ENCODE measurements at regions of chr10 and their contacts with region 1.

Region 1: GRCh38 chr10:132571650-132572535 is 34.3 kb downstream of the INPP5A start:
- DNase-seq: no peak
- ATAC-seq: peak; percentile 39 to 93

Region 2: GRCh38 chr10:132458593-132459300 is 113.1 kb before region 1 on chr10:
- intact Hi-C with region 1: loop called in 1 of 2 experiments (anchors 10 kb)
- DNase-seq: peak; percentile 59
- ATAC-seq: peak; percentile 65 to 74

Region 3: GRCh38 chr10:132506711-132507408 is 65.0 kb before region 1 on chr10:
- intact Hi-C with region 1: loop called in 1 of 2 experiments (anchors 5 kb)
- DNase-seq: no peak
- ATAC-seq: peak; percentile 42 to 46